Activated B cell treated with CpG ODN at 0.5 μM for 24 hours (primary cell): ENCODE measurements at regions of chr3 and their contacts with region 1.

Region 1: DNA sequence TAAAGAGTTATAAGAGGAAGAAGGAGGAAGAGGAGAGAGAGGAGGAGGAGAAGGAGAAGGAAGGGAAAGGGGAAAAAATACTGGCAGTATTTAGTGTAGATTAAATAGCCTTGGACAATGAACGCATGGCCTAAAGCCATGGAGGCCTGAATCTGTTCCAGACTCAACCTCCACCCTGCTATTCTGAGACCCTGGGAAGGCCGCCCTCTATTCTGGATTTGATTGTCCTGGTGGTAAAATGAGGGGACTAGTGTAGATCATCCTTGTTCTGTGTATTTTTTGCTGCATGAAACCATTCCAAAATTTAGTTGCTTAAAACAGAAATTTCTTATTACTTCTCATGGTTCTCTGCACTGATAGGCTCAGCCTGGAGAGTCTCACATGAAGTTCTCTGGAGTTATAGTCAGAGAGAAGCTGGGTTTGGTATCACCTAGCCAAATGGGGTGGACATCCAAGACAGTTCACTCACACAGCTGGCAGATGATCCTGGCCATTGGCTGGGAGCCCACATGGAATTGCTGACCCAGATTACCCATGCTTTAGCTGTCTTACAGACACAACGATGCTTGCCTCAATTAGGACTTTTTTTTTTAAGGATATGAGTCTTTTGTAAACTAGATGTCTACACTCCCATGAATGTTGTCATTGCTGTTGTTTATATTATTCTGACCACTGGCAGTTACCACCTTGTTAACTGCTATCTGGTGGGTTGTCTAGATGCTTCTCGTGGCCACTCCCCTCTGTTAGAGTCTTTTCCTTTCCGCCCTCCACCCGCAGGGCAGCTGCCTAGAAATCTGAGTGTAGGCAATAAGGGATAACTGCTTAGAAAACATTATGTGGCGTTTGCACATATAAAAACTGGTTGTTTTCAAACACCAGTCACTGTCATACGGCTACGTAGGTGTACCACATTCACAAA is 149.9 kb downstream of the SST start:
- DNase-seq: no peak
- ATAC-seq: no peak
- H3K4me3 Mint-ChIP-seq: no peak overlapping the region
- H3K27ac Mint-ChIP-seq: no peak overlapping the region
- H3K4me1 Mint-ChIP-seq: peaks cover 7% of the 10 kb centered on the region
- H3K27me3 Mint-ChIP-seq: peaks cover 4% of the 10 kb centered on the region
- CTCF ChIP-seq: no peak

Region 2: DNA sequence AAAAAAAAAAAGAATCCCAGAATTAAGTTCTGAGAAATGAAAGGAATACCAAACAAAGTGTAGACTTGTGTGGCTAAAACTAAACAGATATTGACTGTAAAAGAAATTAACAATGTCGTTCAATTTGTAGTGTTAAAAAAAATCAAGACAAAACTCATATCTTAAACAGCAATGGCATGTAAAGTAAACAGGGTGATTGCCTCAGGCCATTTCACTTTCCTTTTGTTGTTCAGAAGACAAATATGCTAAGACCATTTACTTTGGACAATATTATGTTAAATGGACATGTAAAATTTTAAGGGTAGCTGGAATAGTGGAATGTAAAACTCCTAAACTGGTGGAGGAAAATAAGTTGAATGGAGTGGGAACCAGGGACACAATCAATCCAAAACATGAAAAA is 13.0 kb before region 1 on chr3:
- CTCF ChIA-PET with region 1: no interaction called
- POLR2A ChIA-PET with region 1: interaction called, 10 read pairs
- intact Hi-C with region 1: no loop called
- DNase-seq: no peak
- ATAC-seq: no peak
- H3K4me3 Mint-ChIP-seq: no peak overlapping the region
- H3K27ac Mint-ChIP-seq: no peak overlapping the region
- H3K4me1 Mint-ChIP-seq: no peaks in the 10 kb centered on the region
- H3K27me3 Mint-ChIP-seq: peaks cover 11% of the 10 kb centered on the region
- CTCF ChIP-seq: no peak

Region 3: GRCh38 chr3:187544296-187544695 is 24.0 kb after region 1 on chr3:
- CTCF ChIA-PET with region 1: no interaction called
- POLR2A ChIA-PET with region 1: no interaction called
- intact Hi-C with region 1: no loop called
- DNase-seq: no peak
- ATAC-seq: no peak
- H3K4me3 Mint-ChIP-seq: no peak overlapping the region
- H3K27ac Mint-ChIP-seq: no peak overlapping the region
- H3K4me1 Mint-ChIP-seq: no peaks in the 10 kb centered on the region
- H3K27me3 Mint-ChIP-seq: peaks cover 14% of the 10 kb centered on the region
- CTCF ChIP-seq: no peak